Left ventricle myocardium inferior (tissue), 1 donor: ENCODE measurements at regions of chr11 and their contacts with region 1.

Region 1: GRCh38 chr11:33362051-33362910 is 105.1 kb downstream of the HIPK3 start:
- DNase-seq: no peak
- H3K4me3 ChIP-seq: no peak overlapping the region
- H3K27ac ChIP-seq: no peak overlapping the region
- H3K4me1 ChIP-seq: peaks cover 11% of the 10 kb centered on the region
- H3K27me3 ChIP-seq: no peaks in the 10 kb centered on the region
- CTCF ChIP-seq: peak; percentile 77

Region 2: GRCh38 chr11:33291004-33291777 is 71.1 kb before region 1 on chr11:
- intact Hi-C with region 1: no loop called
- DNase-seq: no peak
- H3K4me3 ChIP-seq: peak overlapping the region; percentile 49
- H3K27ac ChIP-seq: peak overlapping the region; percentile 88
- H3K4me1 ChIP-seq: peaks cover 95% of the 10 kb centered on the region
- H3K27me3 ChIP-seq: no peaks in the 10 kb centered on the region
- CTCF ChIP-seq: no peak

Region 3: DNA sequence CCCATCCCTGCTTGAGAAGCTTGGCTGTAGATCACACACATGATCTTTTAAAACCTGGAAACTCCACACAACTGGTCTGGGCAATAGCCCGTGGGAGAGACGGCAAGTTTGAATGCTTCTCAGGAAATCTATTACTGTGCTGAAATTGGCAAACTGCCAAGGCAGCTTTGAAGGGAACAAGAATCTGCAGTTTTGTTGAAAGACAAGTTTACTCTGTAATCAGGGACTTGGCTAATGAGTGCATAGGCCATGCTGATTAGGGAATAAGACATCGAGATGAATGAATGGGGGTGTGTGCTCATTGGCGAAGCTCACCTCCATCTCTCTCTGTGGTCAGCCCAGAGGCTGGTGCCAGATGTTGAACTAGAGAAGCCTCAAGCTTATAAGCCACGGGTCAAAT is 113.7 kb after region 1 on chr11:
- intact Hi-C with region 1: no loop called
- DNase-seq: no peak
- H3K4me3 ChIP-seq: no peak overlapping the region
- H3K27ac ChIP-seq: no peak overlapping the region
- H3K4me1 ChIP-seq: peaks cover 5% of the 10 kb centered on the region
- H3K27me3 ChIP-seq: peaks cover 80% of the 10 kb centered on the region
- CTCF ChIP-seq: no peak

Region 4: DNA sequence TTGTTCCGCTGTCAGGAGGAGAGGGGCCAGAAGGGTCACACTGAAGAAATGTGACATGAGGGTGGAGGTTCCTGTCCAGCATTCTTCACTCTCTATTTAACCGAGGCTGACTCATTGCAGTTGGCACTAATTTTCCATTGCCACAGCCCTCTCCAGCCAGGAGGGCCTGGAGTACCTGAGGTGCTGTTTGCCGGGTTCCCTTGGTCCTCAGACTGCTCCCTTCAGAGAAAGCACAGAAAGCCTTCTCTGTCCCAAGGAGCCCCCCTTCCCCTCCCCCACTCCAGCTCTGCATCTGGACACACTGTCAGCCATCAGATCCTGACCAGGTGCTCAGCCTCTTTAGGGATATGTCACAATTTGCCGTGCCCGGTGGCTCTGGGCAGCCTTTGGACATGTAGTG is 341.5 kb after region 1 on chr11:
- intact Hi-C with region 1: no loop called
- DNase-seq: no peak
- H3K4me3 ChIP-seq: no peak overlapping the region
- H3K27ac ChIP-seq: peak overlapping the region; percentile 89
- H3K4me1 ChIP-seq: peaks cover 97% of the 10 kb centered on the region
- H3K27me3 ChIP-seq: no peaks in the 10 kb centered on the region
- CTCF ChIP-seq: no peak

Region 5: GRCh38 chr11:33742249-33742851 is 380.1 kb after region 1 on chr11:
- intact Hi-C with region 1: loop called (anchors 5 kb)
- DNase-seq: no peak
- H3K4me3 ChIP-seq: no peak overlapping the region
- H3K27ac ChIP-seq: peak overlapping the region; percentile 6
- H3K4me1 ChIP-seq: peaks cover 46% of the 10 kb centered on the region
- H3K27me3 ChIP-seq: no peaks in the 10 kb centered on the region
- CTCF ChIP-seq: peak; percentile 75